Vagina (tissue), 2 donors: ENCODE measurements at regions of chr14 and their contacts with region 1.

Region 1: GRCh38 chr14:24431569-24432258 is 2.0 kb downstream of the KHNYN start:
- DNase-seq: peak; percentile 89 to 96
- H3K4me3 ChIP-seq: peak overlapping the region; percentile 72 to 93
- H3K27ac ChIP-seq: peak overlapping the region; percentile 92
- H3K4me1 ChIP-seq: peaks cover 61% of the 10 kb centered on the region
- H3K27me3 ChIP-seq: no peaks in the 10 kb centered on the region
- CTCF ChIP-seq: peak; percentile 59 to 96 (median 96)
- POLR2A ChIP-seq: no peak

Region 2: GRCh38 chr14:24241829-24242443 is 189.8 kb before region 1 on chr14:
- intact Hi-C with region 1: loop called (anchors 5 kb)
- DNase-seq: peak in 1 of 2 donors; percentile 94
- H3K4me3 ChIP-seq: peak overlapping the region; percentile 65 to 75
- H3K27ac ChIP-seq: peak overlapping the region; percentile 98
- H3K4me1 ChIP-seq: peaks cover 47% of the 10 kb centered on the region
- H3K27me3 ChIP-seq: no peaks in the 10 kb centered on the region
- CTCF ChIP-seq: peak in 2 of 3 experiments; percentile 25 to 78
- POLR2A ChIP-seq: no peak

Region 3: GRCh38 chr14:24271134-24271833 is 160.4 kb before region 1 on chr14 and contains the start of gene RABGGTA:
- intact Hi-C with region 1: no loop called
- DNase-seq: no peak
- H3K4me3 ChIP-seq: peak within 1 kb of the TSS; percentile 89 to 90
- H3K27ac ChIP-seq: peak within 1 kb of the TSS; percentile 97
- H3K4me1 ChIP-seq: peaks cover 18% of the 10 kb centered on the region
- H3K27me3 ChIP-seq: no peaks in the 10 kb centered on the region
- CTCF ChIP-seq: peak; percentile 49 to 92 (median 60)
- POLR2A ChIP-seq: no peak
- total RNA-seq, gene RABGGTA: 43.5 TPM

Region 4: DNA sequence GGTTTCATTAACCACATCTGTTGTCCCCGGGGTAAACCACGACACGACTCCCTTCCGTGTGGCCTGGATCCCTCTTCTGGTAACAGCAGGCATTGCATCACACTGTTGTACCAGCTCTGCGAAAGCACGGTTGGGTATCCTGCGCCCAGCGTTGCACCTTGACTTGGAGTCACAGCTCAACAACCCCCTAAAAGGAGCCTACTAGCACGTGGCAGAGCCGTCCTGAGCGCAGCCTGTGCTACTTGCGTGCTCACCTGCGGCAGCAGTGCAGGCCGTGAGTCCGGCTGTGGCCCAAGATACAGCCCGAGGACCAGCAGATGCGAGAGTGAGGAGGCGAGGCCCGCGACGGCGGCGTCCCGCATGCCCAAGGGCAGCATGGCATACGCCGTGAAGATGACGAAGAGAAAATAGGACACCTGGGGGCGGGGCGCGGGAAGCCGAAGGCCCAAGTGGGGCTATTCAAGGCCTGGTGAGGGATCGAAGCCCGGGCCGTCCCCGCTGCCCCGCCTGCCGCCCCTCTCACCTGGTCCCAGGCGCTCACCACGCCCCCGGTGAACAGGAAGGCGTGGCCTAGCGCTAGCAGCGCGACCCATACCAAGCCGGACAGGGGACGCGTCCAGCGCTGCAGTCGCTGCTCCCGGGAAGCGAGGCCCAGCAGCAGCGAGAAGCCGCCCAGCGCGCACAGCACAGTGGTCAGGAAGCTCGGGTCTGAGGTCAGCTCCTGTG is 99.3 kb before region 1 on chr14:
- intact Hi-C with region 1: loop called (anchors 2 kb)
- DNase-seq: no peak
- H3K4me3 ChIP-seq: peak overlapping the region; percentile 28 to 33
- H3K27ac ChIP-seq: no peak overlapping the region
- H3K4me1 ChIP-seq: peaks cover 49% of the 10 kb centered on the region
- H3K27me3 ChIP-seq: no peaks in the 10 kb centered on the region
- CTCF ChIP-seq: peak; percentile 38 to 81 (median 51)
- POLR2A ChIP-seq: no peak

Region 5: GRCh38 chr14:24366721-24367513 is 64.8 kb before region 1 on chr14:
- intact Hi-C with region 1: loop called (anchors 2 kb)
- DNase-seq: peak in 1 of 2 donors; percentile 96
- H3K4me3 ChIP-seq: peak overlapping the region; percentile 74 to 75
- H3K27ac ChIP-seq: peak overlapping the region; percentile 98
- H3K4me1 ChIP-seq: peaks cover 58% of the 10 kb centered on the region
- H3K27me3 ChIP-seq: no peaks in the 10 kb centered on the region
- CTCF ChIP-seq: no peak
- POLR2A ChIP-seq: peak in 1 of 2 donors; percentile 50

Region 6: GRCh38 chr14:24535737-24536136 is 104.0 kb after region 1 on chr14:
- intact Hi-C with region 1: no loop called
- DNase-seq: no peak
- H3K4me3 ChIP-seq: no peak overlapping the region
- H3K27ac ChIP-seq: no peak overlapping the region
- H3K4me1 ChIP-seq: no peaks in the 10 kb centered on the region
- H3K27me3 ChIP-seq: no peaks in the 10 kb centered on the region
- CTCF ChIP-seq: no peak
- POLR2A ChIP-seq: no peak